ENCODE measurements at regions of chr21 and their contacts with region 1.

Region 1: GRCh38 chr21:31343680-31344480 is at the start of gene TIAM1:
- DNase-seq: peak; percentile 46 to 75 (median 57)
- ATAC-seq: peak; percentile 63 to 97 (median 92)
- H3K4me3 ChIP-seq: peak within 1 kb of the TSS; percentile 20 to 64 (median 50)
- H3K27ac ChIP-seq: peak within 1 kb of the TSS in 4 of 12 donors; percentile 21 to 67 (median 50)
- H3K4me1 ChIP-seq: peaks cover 0 to 29% (median 0%) of the 10 kb centered on the region in 12 donors
- H3K27me3 ChIP-seq: peaks cover 0 to 51% (median 20%) of the 10 kb centered on the region in 9 donors
- CTCF ChIP-seq: no peak
- POLR2A ChIP-seq: no peak
- total RNA-seq, gene TIAM1: 0.31 to 9.4 (median 1.7) TPM

Region 2: DNA sequence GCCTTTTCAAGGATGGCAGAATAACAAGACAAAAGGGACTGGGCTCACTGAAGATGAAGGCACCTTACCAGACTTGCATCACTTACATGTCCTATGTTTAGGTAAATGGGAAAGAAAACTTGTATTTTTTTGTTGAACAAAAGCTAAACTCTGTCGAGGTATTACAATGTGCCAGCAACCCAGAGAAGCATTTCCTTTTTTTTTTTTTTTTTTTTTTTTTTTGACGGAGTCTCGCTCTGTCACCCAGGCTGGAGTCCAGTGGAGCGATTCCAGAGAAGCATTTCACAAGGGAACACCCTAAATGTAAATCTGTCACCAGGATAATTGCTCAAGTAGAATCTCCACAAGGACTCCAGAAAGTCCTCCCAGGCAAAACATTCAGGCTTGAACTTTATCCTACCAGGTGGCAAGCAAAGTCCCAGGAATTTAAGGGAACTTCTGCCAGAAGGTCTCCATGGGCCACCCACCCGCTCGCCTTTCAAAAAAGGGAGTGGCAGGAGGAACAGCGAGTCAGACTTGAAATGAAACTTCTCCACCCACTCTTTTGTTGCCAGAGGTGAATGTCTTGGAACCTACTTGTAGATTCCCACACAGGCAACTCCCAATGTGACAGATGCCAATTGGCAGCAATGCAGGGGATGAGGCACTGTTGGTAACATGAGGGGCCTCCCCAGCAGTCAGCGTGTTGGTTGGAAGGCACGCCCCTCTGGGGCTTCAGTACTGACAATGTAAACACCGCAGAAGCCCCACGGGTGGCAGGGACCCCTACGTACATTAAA is 124.9 kb before region 1 on chr21:
- intact Hi-C with region 1: loop called in 1 of 10 experiments (anchors 10 kb)
- DNase-seq: peak in 4 of 5 donors; percentile 16 to 59 (median 56)
- ATAC-seq: peak in 3 of 4 donors; percentile 34 to 73 (median 64)
- H3K4me3 ChIP-seq: peak overlapping the region in 2 of 12 donors; percentile 12 to 18
- H3K27ac ChIP-seq: peak overlapping the region in 1 of 12 donors; percentile 6
- H3K4me1 ChIP-seq: peaks cover 0 to 14% (median 0%) of the 10 kb centered on the region in 12 donors
- H3K27me3 ChIP-seq: no peaks in the 10 kb centered on the region
- CTCF ChIP-seq: no peak
- POLR2A ChIP-seq: no peak

Region 3: DNA sequence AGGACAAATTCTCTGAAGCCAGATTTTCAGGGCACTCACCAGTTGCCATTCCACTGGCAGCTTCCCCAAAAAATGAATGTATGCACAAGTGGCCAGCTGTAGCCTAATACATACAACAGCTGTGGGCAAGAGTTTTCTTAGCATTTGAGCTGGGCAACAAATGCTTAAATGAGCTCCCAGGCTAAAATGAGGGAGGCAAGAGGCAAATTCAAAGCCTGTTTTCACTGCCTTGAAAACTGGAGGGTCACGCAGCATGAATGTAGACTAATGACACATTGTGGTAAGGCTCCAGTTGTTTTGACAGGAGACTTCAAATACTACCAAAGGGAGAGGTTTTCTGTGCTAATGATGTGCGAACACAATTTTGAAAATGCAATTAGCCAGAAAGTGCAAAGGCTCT is 88.0 kb before region 1 on chr21:
- intact Hi-C with region 1: no loop called
- DNase-seq: no peak
- ATAC-seq: no peak
- H3K4me3 ChIP-seq: no peak overlapping the region
- H3K27ac ChIP-seq: no peak overlapping the region
- H3K4me1 ChIP-seq: no peaks in the 10 kb centered on the region
- H3K27me3 ChIP-seq: no peaks in the 10 kb centered on the region
- CTCF ChIP-seq: no peak
- POLR2A ChIP-seq: no peak

Region 4: DNA sequence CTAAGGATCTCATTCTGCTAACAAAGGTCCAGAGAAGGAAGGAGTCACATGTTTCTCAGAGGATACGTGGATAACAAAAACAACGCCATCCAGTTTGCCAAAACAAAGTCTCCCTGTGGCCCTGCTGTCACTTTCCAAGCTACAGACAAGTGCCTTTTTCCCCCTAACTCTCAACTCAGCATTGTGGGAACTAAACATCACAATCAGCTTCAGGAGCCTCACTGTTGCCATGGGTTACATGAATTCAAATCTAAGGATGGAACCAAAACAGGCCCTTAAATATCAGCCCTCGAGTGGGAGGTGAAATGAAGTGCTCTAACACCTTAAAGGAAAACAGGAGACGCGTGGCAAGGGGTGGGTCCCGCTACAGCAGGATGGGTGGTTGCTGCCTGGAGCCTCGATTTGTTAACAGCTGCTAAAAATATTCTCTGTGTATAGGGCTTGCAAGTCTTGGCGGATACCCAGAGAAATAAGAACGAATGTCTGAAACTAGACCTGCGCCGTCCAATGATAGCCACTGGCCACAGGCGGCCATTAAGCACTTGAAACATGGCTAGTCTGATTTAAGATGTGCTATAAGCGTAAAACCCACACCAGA is 249.2 kb after region 1 on chr21:
- intact Hi-C with region 1: loop called in 2 of 10 experiments (anchors 10 kb)
- DNase-seq: peak in 1 of 5 donors; percentile 30
- ATAC-seq: peak in 3 of 4 donors; percentile 54 to 80 (median 78)
- H3K4me3 ChIP-seq: no peak overlapping the region
- H3K27ac ChIP-seq: no peak overlapping the region
- H3K4me1 ChIP-seq: peaks cover 0 to 9% (median 0%) of the 10 kb centered on the region in 12 donors
- H3K27me3 ChIP-seq: peaks cover 0 to 3% (median 0%) of the 10 kb centered on the region in 9 donors
- CTCF ChIP-seq: no peak
- POLR2A ChIP-seq: no peak